ENCODE measurements at regions of chr3 and their contacts with region 1.

Region 1: DNA sequence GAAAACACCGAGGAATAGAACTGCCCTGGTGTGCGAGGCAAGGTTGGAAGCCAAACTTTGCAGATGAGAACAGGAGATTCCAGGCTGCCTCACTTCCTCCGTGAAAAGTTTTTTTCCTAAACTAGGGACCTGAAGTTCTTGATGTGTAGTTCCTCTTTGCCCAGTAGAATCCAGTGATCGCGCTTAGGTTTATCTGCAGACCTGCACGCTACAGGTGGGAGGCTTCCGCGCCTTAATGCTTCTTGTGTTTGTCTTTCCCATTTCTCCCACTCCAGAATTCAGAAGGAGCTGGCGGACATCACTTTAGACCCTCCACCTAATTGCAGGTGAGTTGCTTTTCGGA is 5.4 kb downstream of the UBE2E1 start:
- DNase-seq: no peak
- ATAC-seq: peak; percentile 6; the same call in 2 of the 3 replicates
- H3K4me3 ChIP-seq: peak overlapping the region; percentile 98
- H3K27ac ChIP-seq: peak overlapping the region; percentile 86
- H3K4me1 ChIP-seq: peaks cover 7% of the 10 kb centered on the region; the same call in 1 of the 2 replicates
- H3K27me3 ChIP-seq: no peaks in the 10 kb centered on the region
- CTCF ChIP-seq: no peak
- EP300 ChIP-seq: no peak
- POLR2A ChIP-seq: no peak
- RAD21 ChIP-seq: no peak

Region 2: GRCh38 chr3:23826382-23827064 is 15.4 kb after region 1 on chr3:
- CTCF ChIA-PET with region 1: interaction called, 36 read pairs
- POLR2A ChIA-PET with region 1: interaction called, 92 read pairs
- RAD21 ChIA-PET with region 1: interaction called, 96 read pairs
- SMC1A ChIA-PET with region 1: interaction called, 224 read pairs
- in situ Hi-C with region 1: no loop called
- intact Hi-C with region 1: loop called (anchors 1 kb)
- DNase-seq: no peak
- ATAC-seq: no peak
- H3K4me3 ChIP-seq: no peak overlapping the region
- H3K27ac ChIP-seq: peak overlapping the region; percentile 52; the same call in 1 of the 2 replicates
- H3K4me1 ChIP-seq: peaks cover 42% of the 10 kb centered on the region
- H3K27me3 ChIP-seq: no peaks in the 10 kb centered on the region
- CTCF ChIP-seq: no peak
- EP300 ChIP-seq: no peak
- POLR2A ChIP-seq: no peak
- RAD21 ChIP-seq: no peak

Region 3: DNA sequence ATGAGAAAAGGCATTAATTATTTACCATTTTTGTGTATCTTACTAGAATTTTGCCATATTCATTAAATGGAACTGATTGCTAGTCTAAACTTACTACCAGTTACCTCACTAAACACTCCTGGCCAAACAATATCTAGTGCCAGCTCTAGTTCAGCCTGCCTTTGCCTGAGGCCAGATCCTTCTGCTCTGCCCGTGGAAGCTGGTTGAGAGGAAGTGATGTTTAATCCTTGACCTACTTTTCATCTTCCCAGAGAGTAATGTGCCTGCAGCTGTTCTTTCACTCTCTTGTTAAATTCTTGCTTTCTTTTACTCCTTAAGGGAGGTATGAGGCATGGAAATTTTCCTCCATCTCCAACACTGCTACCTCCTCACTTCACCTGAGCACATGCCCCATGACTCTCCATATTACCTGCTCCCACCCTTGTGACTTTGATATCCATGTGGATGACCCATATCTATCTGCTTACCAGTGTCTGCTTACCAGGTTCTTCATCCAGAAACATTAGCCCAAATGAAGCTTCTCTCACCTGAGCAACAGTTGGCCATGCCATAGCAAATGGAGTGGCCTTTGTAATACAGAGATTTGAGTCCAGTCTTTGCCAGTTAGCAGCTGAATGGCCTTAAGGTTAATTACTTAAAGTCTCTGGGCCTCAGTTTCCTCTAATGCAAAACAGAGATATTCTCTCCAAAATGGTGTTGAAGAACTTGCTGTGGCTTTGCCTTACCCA is 48.0 kb after region 1 on chr3:
- CTCF ChIA-PET with region 1: interaction called, 3 read pairs
- POLR2A ChIA-PET with region 1: interaction called, 3 read pairs
- RAD21 ChIA-PET with region 1: interaction called, 9 read pairs
- SMC1A ChIA-PET with region 1: interaction called, 24 read pairs
- in situ Hi-C with region 1: no loop called
- intact Hi-C with region 1: no loop called
- DNase-seq: no peak
- ATAC-seq: no peak
- H3K4me3 ChIP-seq: no peak overlapping the region
- H3K27ac ChIP-seq: no peak overlapping the region
- H3K4me1 ChIP-seq: peaks cover 30% of the 10 kb centered on the region
- H3K27me3 ChIP-seq: no peaks in the 10 kb centered on the region
- CTCF ChIP-seq: no peak
- EP300 ChIP-seq: no peak
- POLR2A ChIP-seq: no peak
- RAD21 ChIP-seq: no peak

Region 4: GRCh38 chr3:23916886-23917678 is 105.9 kb after region 1 on chr3 and contains the starts of genes NKIRAS1 and RPL15:
- CTCF ChIA-PET with region 1: no interaction called
- POLR2A ChIA-PET with region 1: interaction called, 17 read pairs
- RAD21 ChIA-PET with region 1: interaction called, 3 read pairs
- SMC1A ChIA-PET with region 1: interaction called, 10 read pairs
- in situ Hi-C with region 1: no loop called
- intact Hi-C with region 1: loop called (anchors 1 kb)
- DNase-seq: peak; percentile 89
- ATAC-seq: peak; percentile 90
- H3K4me3 ChIP-seq: peak within 1 kb of the TSS; percentile 100
- H3K27ac ChIP-seq: peak within 1 kb of the TSS; percentile 95
- H3K4me1 ChIP-seq: peaks cover 3% of the 10 kb centered on the region
- H3K27me3 ChIP-seq: no peaks in the 10 kb centered on the region
- CTCF ChIP-seq: peak in 2 of 3 experiments; percentile 15 to 38; a peak in 2 of 6 replicates
- EP300 ChIP-seq: peak; percentile 42 to 71; a peak in 2 of 4 replicates
- POLR2A ChIP-seq: peak; percentile 100
- RAD21 ChIP-seq: no peak
- polyA plus RNA-seq, gene NKIRAS1: 8.9 to 10.2 TPM
- polyA plus RNA-seq, gene RPL15: 6,967 to 10,761 TPM

Measured in GM12878 (cell line).